ENCODE measurements at regions of chr20 and their contacts with region 1.

Region 1: DNA sequence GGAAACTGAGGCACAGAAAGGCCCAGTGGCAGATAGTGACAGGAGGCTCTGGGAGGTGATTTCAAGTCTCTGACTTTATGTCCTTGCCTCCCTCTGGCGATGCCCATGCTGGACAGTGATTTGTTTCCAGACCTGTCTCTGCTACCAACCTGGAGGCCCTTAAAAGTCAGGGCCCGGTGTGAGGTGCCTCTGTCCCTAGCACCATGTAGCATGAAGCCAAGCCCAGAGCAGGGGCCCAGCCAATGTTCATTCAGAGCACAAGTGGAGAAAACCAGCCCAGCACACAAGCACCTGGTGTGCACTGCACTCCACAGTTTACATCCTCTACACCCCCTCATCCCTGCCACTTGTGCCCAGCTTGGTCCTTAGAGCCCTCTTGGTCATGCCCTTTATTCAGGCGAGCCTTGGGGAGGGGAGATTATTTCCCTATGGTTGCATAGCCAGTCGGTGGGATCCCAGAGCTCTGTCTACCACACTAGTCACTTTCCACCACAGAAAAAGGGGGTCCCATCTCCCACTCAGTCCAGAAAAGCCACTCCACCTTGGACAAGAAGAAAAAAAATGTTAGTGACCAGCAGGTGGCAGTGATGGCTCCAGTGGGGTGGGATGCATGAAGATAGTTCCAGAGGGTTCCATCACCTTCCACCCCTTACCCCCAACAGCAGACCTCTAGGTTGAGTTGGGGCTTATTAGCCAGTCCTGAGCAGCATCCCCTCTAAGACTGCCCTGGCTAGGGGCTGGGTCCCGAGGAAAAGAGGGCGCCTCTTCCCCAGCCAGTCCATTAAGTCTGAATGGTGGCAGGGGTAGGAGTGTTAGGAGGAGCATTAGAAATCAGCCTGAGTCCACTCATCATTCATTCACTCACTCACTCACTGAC is 30.9 kb downstream of the KIAA1755 start:
- DNase-seq: peak; percentile 68
- ATAC-seq: peak; percentile 70
- H3K4me3 ChIP-seq: no peak overlapping the region
- H3K27ac ChIP-seq: no peak overlapping the region
- H3K4me1 ChIP-seq: no peaks in the 10 kb centered on the region
- H3K27me3 ChIP-seq: no peaks in the 10 kb centered on the region
- CTCF ChIP-seq: peak; percentile 86

Region 2: GRCh38 chr20:38043512-38044300 is 185.9 kb before region 1 on chr20:
- CTCF ChIA-PET with region 1: no interaction called
- POLR2A ChIA-PET with region 1: interaction called, 14 read pairs
- intact Hi-C with region 1: no loop called
- DNase-seq: peak; percentile 97
- ATAC-seq: peak; percentile 99
- H3K4me3 ChIP-seq: peak overlapping the region; percentile 57
- H3K27ac ChIP-seq: peak overlapping the region; percentile 97
- H3K4me1 ChIP-seq: peaks cover 42% of the 10 kb centered on the region
- H3K27me3 ChIP-seq: no peaks in the 10 kb centered on the region
- CTCF ChIP-seq: peak; percentile 33; the same call in 1 of the 2 replicates

Region 3: DNA sequence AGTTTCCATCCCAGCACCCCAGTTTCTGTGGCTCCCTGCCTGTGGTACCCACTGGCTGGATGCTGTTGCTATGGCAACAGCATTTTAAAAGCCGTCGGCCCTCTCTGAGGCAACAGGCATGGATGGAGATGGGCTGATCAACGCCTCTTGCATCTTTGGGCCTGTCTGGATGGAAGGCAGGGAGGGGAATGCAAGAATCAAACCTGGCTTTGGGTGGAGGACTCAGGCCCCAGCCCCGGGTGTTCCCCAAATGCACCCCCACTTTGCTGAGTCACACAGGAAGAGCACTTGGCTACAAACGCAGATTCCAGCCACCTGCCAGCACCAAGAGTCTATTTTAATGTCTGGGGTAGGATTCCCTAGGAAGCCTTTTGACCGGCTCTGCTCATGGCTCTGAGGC is 18.9 kb before region 1 on chr20:
- CTCF ChIA-PET with region 1: no interaction called
- POLR2A ChIA-PET with region 1: no interaction called
- intact Hi-C with region 1: no loop called
- DNase-seq: peak; percentile 36
- ATAC-seq: peak; percentile 47
- H3K4me3 ChIP-seq: no peak overlapping the region
- H3K27ac ChIP-seq: no peak overlapping the region
- H3K4me1 ChIP-seq: peaks cover 12% of the 10 kb centered on the region
- H3K27me3 ChIP-seq: no peaks in the 10 kb centered on the region
- CTCF ChIP-seq: no peak

Region 4: GRCh38 chr20:38290832-38291581 is 61.4 kb after region 1 on chr20:
- CTCF ChIA-PET with region 1: no interaction called
- POLR2A ChIA-PET with region 1: no interaction called
- intact Hi-C with region 1: loop called (anchors 1 kb)
- DNase-seq: peak; percentile 58
- ATAC-seq: peak; percentile 86
- H3K4me3 ChIP-seq: peak overlapping the region; percentile 13
- H3K27ac ChIP-seq: no peak overlapping the region
- H3K4me1 ChIP-seq: no peaks in the 10 kb centered on the region
- H3K27me3 ChIP-seq: no peaks in the 10 kb centered on the region
- CTCF ChIP-seq: peak; percentile 85

Region 5: DNA sequence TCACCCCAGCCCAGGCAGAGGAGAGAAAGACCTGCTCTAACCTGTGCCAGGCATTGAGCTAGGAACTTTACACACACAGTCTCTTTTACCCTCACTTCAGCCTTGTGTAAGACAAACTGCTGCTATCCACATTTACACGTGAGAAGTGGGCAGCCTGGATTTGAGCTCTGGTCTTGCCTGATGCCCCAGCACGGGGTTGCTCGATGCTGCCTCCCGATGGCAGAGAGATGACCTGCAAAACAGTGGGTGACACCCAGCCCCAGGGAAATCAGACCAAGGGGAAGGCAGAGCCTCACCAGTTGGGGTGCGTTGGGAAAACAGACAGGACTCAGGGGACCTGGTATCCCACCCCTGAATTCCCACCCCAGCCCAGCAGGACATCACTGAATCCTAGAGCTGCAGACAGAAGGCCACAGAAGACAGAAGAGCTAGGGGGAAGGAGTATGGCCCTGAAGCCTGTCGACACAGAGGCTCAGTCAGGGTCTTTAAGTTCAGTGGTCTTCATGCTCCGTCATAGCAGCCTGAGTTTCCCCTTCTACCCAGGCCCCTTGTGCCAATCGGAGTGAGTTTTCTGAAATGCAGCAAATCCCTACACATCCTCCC is 75.3 kb after region 1 on chr20:
- CTCF ChIA-PET with region 1: interaction called, 20 read pairs
- POLR2A ChIA-PET with region 1: no interaction called
- intact Hi-C with region 1: no loop called
- DNase-seq: peak; percentile 64
- ATAC-seq: peak; percentile 64
- H3K4me3 ChIP-seq: no peak overlapping the region
- H3K27ac ChIP-seq: no peak overlapping the region
- H3K4me1 ChIP-seq: peaks cover 7% of the 10 kb centered on the region
- H3K27me3 ChIP-seq: no peaks in the 10 kb centered on the region
- CTCF ChIP-seq: peak; percentile 79

Region 6: GRCh38 chr20:38315290-38315966 is 85.8 kb after region 1 on chr20:
- CTCF ChIA-PET with region 1: interaction called, 4 read pairs
- POLR2A ChIA-PET with region 1: no interaction called
- intact Hi-C with region 1: loop called (anchors 2 kb)
- DNase-seq: peak; percentile 19
- ATAC-seq: peak; percentile 37; the same call in 1 of the 2 replicates
- H3K4me3 ChIP-seq: no peak overlapping the region
- H3K27ac ChIP-seq: no peak overlapping the region
- H3K4me1 ChIP-seq: no peaks in the 10 kb centered on the region
- H3K27me3 ChIP-seq: no peaks in the 10 kb centered on the region
- CTCF ChIP-seq: 0 out of 2 replicates have a peak, but pooled peaks have one; percentile 23

Region 7: DNA sequence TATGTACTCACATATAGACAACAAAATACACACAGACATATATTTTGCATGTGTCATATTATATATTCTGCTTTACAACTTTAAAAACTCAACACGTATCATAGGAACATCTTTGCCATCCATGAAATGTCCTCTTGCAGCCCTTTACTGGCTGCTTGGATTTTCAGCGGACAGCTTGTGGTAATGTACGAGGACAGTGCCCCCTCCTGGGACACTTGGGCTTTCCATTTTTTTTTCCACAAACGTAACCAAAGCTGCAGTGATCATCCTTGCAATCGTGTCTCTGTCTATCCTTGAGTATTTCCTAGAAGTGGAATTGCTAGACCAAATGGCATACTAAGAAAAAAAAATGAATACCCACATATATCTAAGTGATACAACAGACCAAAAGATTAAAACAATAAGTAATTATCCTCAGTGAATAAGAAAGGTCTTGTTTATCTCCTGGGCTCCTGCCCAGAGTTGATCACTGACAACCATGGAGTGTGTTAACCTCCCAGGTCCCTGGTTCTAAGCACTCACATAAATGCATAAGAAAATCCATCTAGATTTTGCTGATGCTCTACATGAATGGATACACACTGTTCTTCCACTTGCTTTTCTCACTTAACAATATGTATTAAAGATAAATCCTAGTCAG is 92.5 kb after region 1 on chr20:
- CTCF ChIA-PET with region 1: interaction called, 7 read pairs
- POLR2A ChIA-PET with region 1: no interaction called
- intact Hi-C with region 1: loop called (anchors 1 kb)
- DNase-seq: peak; percentile 75
- ATAC-seq: peak; percentile 79
- H3K4me3 ChIP-seq: no peak overlapping the region
- H3K27ac ChIP-seq: no peak overlapping the region
- H3K4me1 ChIP-seq: 0 out of 2 replicates have a peak, but pooled peaks cover 3% of the 10 kb centered on the region
- H3K27me3 ChIP-seq: no peaks in the 10 kb centered on the region
- CTCF ChIP-seq: peak; percentile 92

Region 8: DNA sequence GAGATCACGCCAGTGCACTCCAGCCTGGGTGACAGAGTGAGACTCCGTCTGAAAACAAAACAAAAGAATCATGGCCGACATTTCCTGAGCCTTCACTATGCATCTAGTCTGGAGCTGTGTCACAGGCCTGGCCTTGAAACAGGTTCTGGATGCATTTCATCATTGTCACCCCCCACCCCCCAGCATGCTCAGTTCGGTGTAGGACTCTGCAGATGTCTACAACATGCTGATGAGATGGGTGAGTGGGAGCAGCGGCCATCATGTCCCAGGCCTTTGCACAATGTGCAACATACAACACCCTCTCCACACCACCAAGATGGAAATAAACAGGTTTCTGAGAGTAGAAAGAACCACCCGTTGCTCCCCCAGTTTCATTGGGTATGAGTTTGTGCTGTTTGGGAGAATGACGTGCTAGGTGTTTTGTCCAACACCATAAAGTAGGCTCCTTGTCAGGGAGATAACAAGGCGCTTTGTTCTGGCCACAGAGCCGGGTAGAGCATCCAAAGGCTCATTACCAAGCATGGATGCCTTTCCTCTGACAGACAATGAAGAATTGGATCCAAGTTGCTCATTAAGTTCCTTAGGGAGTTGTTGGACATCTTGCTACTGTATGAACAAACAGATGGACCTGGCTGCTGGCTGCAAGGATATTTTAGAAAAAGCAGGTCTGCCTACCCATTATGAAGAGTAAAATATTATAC is 183.4 kb after region 1 on chr20:
- CTCF ChIA-PET with region 1: no interaction called
- POLR2A ChIA-PET with region 1: no interaction called
- intact Hi-C with region 1: loop called (anchors 1 kb)
- DNase-seq: no peak
- ATAC-seq: no peak
- H3K4me3 ChIP-seq: no peak overlapping the region
- H3K27ac ChIP-seq: no peak overlapping the region
- H3K4me1 ChIP-seq: no peaks in the 10 kb centered on the region
- H3K27me3 ChIP-seq: no peaks in the 10 kb centered on the region
- CTCF ChIP-seq: no peak

Measured in PC-3 (cell line).